Naive thymus-derived CD4-positive, alpha-beta T cell (primary cell): ENCODE measurements at regions of chr5 and their contacts with region 1.

Region 1: DNA sequence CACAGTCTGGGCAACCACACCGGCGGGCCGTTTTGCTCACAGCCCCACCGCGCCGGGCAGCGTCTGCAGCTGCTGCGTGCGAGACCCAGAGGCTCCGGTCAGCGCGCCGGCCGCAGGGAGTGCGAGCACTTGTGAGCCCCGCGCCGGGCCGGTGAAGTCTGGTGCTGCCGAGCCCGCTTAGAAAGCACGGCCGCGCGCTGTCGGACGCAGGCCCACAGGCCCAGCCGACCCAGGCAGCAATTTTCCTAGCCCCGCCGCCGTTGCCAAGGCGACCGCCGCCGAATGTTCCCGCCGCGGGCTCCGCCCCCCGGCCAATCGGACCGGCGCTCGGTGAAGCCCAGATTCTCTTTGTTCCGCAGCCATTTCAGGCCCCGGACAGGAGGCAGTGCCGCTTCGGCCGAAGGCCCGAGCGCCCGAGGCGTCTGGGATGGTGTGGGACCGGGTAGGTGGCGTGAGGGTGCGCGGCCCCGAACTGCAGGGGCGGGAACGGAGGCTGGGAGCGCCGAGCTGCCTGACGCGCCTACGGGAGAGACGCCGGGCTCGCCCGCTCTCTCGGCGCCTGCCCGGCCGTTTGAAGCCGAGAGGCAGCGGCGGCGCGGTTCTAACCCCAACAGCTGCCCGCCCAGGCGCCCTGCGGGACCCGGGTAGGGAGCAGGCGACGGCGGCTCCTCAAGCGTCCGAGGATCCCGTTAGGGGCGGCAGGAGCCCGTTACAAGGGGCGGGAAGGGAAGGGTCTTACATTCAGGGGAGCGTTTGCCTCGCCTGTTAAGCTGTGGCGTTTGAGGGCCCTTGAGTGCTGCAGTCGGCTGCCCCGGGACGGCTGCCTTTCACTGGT is at the start of gene TNPO1:
- DNase-seq: peak; percentile 75 to 89 (median 84)
- ATAC-seq: peak; percentile 87
- H3K4me3 ChIP-seq: peak within 1 kb of the TSS; percentile 83
- H3K4me3 Mint-ChIP-seq: peak within 1 kb of the TSS; percentile 90 to 100 (median 98)
- H3K27ac ChIP-seq: peak within 1 kb of the TSS; percentile 93
- H3K27ac Mint-ChIP-seq: peak within 1 kb of the TSS; percentile 81 to 98 (median 94)
- H3K4me1 ChIP-seq: peaks cover 6 to 21% of the 10 kb centered on the region in 2 donors
- H3K4me1 Mint-ChIP-seq: peaks cover 14 to 32% (median 23%) of the 10 kb centered on the region in 7 donors
- H3K27me3 ChIP-seq: no peaks in the 10 kb centered on the region
- H3K27me3 Mint-ChIP-seq: peaks cover 8 to 30% (median 20%) of the 10 kb centered on the region in 5 donors
- total RNA-seq, gene TNPO1: 52.8 to 96.3 (median 82.1) TPM

Region 2: DNA sequence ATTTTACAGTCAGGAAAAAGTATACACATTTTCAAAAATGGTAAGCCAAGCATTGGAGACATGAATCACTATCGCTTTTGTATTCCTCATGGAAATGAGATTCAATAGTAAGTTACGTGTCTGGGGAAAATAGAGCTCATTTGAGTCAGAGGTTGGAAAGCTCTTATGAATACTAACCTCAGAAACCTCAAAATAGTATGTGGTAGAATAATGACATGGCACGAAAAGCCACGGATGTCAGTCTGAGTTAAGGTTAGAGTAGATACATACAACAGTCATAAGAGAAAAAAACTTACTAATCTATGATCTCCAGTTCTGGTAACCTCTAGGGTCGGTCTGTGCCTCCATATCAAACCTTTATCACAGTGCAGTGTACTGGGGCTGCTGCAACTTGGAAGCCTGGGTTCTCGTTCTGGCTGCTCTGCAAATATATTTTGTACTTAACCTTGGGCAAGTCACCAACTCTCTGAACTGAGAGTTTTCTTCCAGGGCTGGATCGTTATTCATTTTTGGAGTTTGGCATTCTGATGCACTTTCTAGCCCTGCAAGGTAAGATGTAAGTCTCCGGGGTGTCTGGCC is 677.5 kb before region 1 on chr5:
- CTCF ChIA-PET with region 1: no interaction called
- POLR2A ChIA-PET with region 1: no interaction called
- intact Hi-C with region 1: loop called in 1 of 2 experiments (anchors 5 kb)
- DNase-seq: no peak
- ATAC-seq: peak; percentile 66
- H3K4me3 ChIP-seq: no peak overlapping the region
- H3K4me3 Mint-ChIP-seq: no peak overlapping the region
- H3K27ac ChIP-seq: no peak overlapping the region
- H3K27ac Mint-ChIP-seq: no peak overlapping the region
- H3K4me1 ChIP-seq: no peaks in the 10 kb centered on the region
- H3K4me1 Mint-ChIP-seq: peaks cover 0 to 10% (median 4%) of the 10 kb centered on the region in 7 donors
- H3K27me3 ChIP-seq: no peaks in the 10 kb centered on the region
- H3K27me3 Mint-ChIP-seq: peaks cover 15 to 61% (median 40%) of the 10 kb centered on the region in 5 donors

Region 3: DNA sequence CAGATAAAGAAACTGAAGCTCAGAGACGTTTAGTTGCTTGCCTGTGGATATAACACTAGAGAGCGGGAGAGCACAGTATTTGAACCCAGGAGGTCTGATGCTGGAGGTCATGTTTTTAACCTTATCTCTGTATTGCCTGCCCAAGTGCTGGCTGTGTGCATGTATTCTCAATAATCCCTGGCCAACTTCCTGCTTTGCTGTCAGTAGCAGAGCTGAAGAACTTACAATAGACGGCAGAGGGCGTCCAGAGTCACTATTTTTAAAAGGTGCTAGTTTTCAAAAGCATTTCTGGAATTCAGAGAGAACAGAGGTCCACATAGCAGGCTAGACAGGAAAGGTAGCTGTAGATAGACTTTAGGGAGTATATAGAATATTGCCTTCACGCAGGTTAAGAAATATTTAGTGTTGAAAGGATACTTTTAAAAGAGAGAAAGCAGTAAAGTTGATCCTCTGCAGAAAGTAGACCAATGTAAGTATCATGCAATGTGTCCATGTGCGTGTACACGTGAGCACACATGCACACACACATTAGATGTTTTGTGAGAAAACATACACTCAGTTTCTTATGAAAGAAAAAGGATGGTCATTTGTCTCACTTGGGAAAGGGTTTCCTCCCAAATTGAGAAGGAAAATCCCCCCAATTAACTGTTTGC is 450.1 kb before region 1 on chr5:
- CTCF ChIA-PET with region 1: interaction called, 3 read pairs
- POLR2A ChIA-PET with region 1: no interaction called
- intact Hi-C with region 1: loop called (anchors 1 to 2 kb)
- DNase-seq: peak in 6 of 9 donors; percentile 2 to 32 (median 12)
- ATAC-seq: peak; percentile 74
- H3K4me3 ChIP-seq: no peak overlapping the region
- H3K4me3 Mint-ChIP-seq: no peak overlapping the region
- H3K27ac ChIP-seq: no peak overlapping the region
- H3K27ac Mint-ChIP-seq: peak overlapping the region in 1 of 9 donors; percentile 8
- H3K4me1 ChIP-seq: no peaks in the 10 kb centered on the region
- H3K4me1 Mint-ChIP-seq: peaks cover 0 to 7% (median 0%) of the 10 kb centered on the region in 7 donors
- H3K27me3 ChIP-seq: no peaks in the 10 kb centered on the region
- H3K27me3 Mint-ChIP-seq: no peaks in the 10 kb centered on the region

Region 4: DNA sequence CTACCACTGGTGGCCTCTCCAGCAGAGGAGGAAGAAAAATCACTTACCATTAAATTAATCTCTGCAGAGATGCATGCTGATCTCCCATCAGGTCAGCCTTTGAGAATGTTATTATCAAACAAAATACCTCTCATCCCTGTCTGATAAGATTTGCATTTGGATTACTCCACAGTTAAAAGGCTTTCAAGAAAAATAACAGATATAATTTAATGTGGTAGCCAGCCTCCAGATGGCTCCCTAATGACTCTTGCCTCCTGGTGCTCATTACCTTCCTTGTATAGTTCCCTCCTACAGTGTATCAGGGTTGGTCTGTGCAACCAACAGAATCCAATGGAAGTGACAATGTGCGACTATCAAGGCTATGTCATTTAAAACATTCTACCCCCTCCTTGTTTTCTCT is 63.6 kb before region 1 on chr5:
- CTCF ChIA-PET with region 1: no interaction called
- POLR2A ChIA-PET with region 1: no interaction called
- intact Hi-C with region 1: loop called in 1 of 2 experiments (anchors 2 kb)
- DNase-seq: no peak
- ATAC-seq: no peak
- H3K4me3 ChIP-seq: no peak overlapping the region
- H3K4me3 Mint-ChIP-seq: no peak overlapping the region
- H3K27ac ChIP-seq: no peak overlapping the region
- H3K27ac Mint-ChIP-seq: no peak overlapping the region
- H3K4me1 ChIP-seq: no peaks in the 10 kb centered on the region
- H3K4me1 Mint-ChIP-seq: peaks cover 0 to 1% (median 0%) of the 10 kb centered on the region in 7 donors
- H3K27me3 ChIP-seq: no peaks in the 10 kb centered on the region
- H3K27me3 Mint-ChIP-seq: peaks cover 0 to 10% (median 5%) of the 10 kb centered on the region in 5 donors

Region 5: DNA sequence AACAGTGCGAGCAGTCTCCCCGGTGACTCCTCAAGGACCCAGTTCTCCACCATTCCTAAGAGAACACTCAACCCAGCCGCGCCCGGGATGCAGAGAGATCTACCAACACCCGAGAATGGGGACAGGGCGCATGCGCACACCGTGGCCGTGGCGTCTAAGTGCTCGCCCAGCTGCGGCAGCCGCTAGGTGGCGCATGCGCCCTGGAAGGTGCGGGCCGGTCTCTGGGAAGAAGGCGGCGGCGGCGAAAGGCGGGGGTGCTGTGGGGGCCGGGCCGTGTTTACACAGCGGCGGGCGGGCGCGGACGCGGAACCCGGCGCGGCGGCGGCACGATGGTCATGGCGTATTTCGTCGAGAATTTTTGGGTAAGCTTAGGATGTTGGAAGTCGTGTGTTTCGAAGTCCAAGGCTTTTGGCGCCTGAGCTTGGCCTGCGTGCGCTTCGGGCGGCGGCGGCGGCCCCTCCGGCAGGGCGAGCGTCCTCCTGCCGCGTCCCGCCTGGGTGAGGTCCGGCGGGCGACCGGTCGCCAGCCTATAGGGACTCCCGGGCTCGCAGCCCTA is 139.3 kb after region 1 on chr5 and contains the start of gene FCHO2:
- CTCF ChIA-PET with region 1: no interaction called
- POLR2A ChIA-PET with region 1: interaction called, 3 read pairs
- intact Hi-C with region 1: loop called (anchors 1 to 2 kb)
- DNase-seq: peak; percentile 82 to 98 (median 91)
- ATAC-seq: peak; percentile 98
- H3K4me3 ChIP-seq: peak within 1 kb of the TSS; percentile 85
- H3K4me3 Mint-ChIP-seq: peak within 1 kb of the TSS; percentile 90 to 95 (median 94)
- H3K27ac ChIP-seq: no peak within 1 kb of the TSS
- H3K27ac Mint-ChIP-seq: peak within 1 kb of the TSS; percentile 22 to 92 (median 80)
- H3K4me1 ChIP-seq: peaks cover 5 to 12% of the 10 kb centered on the region in 2 donors
- H3K4me1 Mint-ChIP-seq: peaks cover 10 to 19% (median 13%) of the 10 kb centered on the region in 7 donors
- H3K27me3 ChIP-seq: peaks cover 3 to 4% of the 10 kb centered on the region in 2 donors
- H3K27me3 Mint-ChIP-seq: peaks cover 43 to 69% (median 55%) of the 10 kb centered on the region in 5 donors
- total RNA-seq, gene FCHO2: 1.7 to 7.1 (median 3.0) TPM

Region 6: DNA sequence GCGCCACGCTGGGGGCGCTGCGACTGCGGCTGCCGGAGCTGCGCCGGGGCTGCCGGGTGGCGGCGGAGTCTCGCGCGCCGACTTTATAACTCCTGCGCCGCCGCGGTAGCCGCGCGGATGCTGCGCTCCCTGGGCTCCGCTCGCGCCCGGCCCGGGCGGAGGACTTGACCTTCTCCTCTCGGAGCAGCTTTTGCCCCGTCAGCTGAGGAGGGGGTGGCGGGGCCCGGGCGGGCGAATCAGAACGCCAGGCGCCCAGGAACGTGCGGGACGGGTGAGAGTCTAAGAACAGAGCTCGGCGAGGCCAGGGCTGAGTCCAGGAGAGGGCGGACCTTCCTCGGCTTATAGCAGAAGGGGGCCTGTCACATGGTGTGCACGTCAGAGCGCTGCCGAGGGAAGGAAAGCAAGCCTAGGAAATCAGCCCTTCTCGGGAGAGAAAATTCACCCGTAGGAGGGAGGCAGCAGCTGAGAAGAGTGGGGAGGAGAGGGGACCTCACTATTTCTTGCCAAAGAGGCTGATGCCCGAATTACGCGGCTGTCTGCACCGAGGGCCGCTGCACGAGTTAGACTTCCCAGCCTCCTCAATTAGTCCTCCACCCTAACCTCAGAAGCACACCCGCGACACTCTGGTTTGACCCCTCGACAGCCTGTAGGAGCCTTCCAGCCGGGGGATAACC is 632.1 kb after region 1 on chr5 and contains the start of gene FOXD1:
- CTCF ChIA-PET with region 1: no interaction called
- POLR2A ChIA-PET with region 1: no interaction called
- intact Hi-C with region 1: loop called in 1 of 2 experiments (anchors 10 kb)
- DNase-seq: peak in 2 of 9 donors; percentile 27 to 30
- ATAC-seq: peak; percentile 49
- H3K4me3 ChIP-seq: peak within 1 kb of the TSS; percentile 39
- H3K4me3 Mint-ChIP-seq: peak within 1 kb of the TSS; percentile 85 to 90 (median 87)
- H3K27ac ChIP-seq: no peak within 1 kb of the TSS
- H3K27ac Mint-ChIP-seq: peak within 1 kb of the TSS in 8 of 9 donors; percentile 33 to 88 (median 69)
- H3K4me1 ChIP-seq: peaks cover 11 to 14% of the 10 kb centered on the region in 2 donors
- H3K4me1 Mint-ChIP-seq: peaks cover 0 to 29% (median 21%) of the 10 kb centered on the region in 7 donors
- H3K27me3 ChIP-seq: peaks cover 66 to 75% of the 10 kb centered on the region in 2 donors
- H3K27me3 Mint-ChIP-seq: peaks cover 70 to 83% (median 74%) of the 10 kb centered on the region in 5 donors
- total RNA-seq, gene FOXD1: 0.16 to 0.32 TPM in 2 of 5 experiments, not detected in the others